Ascending aorta (tissue), 2 donors: ENCODE measurements at regions of chr4 and their contacts with region 1.

Region 1: DNA sequence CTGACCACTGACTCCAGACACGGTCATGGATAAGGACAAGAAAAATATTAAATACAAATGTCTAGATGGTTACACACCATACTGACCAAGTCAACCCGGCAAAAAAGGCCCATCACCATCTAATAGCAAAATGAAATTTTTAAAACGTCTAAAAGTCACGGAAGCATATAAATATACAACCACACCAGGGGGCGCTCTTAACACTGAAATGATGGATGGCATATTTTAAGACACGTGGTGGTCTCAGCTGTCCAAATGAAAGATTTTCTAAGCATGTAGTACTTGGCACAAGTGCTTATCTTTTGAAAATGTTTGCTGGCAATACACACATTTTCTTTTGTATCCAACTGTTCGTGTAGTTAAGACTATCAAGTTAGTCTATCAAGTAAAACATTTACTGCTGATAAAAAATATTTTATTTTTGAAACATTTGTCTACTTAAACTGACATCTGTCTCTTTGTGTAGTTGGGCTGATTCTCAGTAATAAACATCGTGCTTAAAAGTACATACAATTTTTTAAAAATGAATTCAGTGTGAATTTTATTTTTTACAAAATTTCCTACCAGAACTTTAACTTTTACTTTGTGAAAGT is 64.6 kb downstream of the COX7B2 start:
- DNase-seq: no peak
- H3K4me3 ChIP-seq: no peak overlapping the region
- H3K27ac ChIP-seq: no peak overlapping the region
- H3K4me1 ChIP-seq: no peaks in the 10 kb centered on the region
- H3K27me3 ChIP-seq: no peaks in the 10 kb centered on the region
- CTCF ChIP-seq: peak; percentile 36 to 65 (median 64)

Region 2: GRCh38 chr4:46886711-46887110 is 42.3 kb after region 1 on chr4:
- intact Hi-C with region 1: loop called (anchors 5 kb)
- DNase-seq: no peak
- H3K4me3 ChIP-seq: no peak overlapping the region
- H3K27ac ChIP-seq: no peak overlapping the region
- H3K4me1 ChIP-seq: no peaks in the 10 kb centered on the region
- H3K27me3 ChIP-seq: no peaks in the 10 kb centered on the region
- CTCF ChIP-seq: peak in 1 of 3 experiments; percentile 26

Region 3: DNA sequence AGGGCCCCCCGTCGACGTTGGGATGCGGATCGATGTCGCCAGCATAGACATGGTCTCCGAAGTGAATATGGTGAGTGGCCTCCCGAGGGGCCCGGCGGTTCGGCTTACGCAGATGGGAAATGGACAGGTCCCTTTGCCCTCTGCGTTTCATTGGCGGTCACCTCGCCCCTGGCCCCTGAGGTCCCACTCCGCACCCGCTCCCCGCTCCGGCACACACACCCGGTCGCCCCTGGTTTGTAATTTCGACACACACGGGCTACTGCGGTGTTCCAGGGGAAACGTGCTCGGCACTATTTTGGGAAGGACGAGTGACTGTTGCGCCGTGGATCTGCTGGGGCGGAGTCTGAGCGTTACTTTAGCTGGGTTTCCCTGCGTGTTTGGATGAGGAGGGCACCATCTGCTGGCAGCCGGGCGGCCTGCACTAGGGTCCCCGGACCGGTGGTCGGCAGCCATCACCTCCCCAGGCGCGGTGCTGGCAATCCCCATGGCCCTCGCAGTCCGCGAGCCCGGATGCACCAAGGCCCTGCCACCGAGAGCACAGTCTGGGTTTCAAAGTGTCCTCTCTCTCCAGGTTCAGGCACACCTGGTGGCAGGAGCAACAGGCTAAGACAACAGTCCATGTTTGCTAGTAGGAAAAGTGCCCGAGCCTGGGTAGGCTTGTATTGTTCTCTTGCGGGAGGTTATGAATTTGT is 188.1 kb after region 1 on chr4:
- intact Hi-C with region 1: loop called (anchors 1 kb)
- DNase-seq: peak in 1 of 2 donors; percentile 65
- H3K4me3 ChIP-seq: peak overlapping the region; percentile 40 to 48
- H3K27ac ChIP-seq: no peak overlapping the region
- H3K4me1 ChIP-seq: peaks cover 0 to 2% of the 10 kb centered on the region in 2 donors
- H3K27me3 ChIP-seq: no peaks in the 10 kb centered on the region
- CTCF ChIP-seq: peak; percentile 7 to 50 (median 44)

Region 4: GRCh38 chr4:47122592-47123291 is 278.3 kb after region 1 on chr4:
- intact Hi-C with region 1: loop called (anchors 2 kb)
- DNase-seq: peak in 1 of 2 donors; percentile 65
- H3K4me3 ChIP-seq: no peak overlapping the region
- H3K27ac ChIP-seq: no peak overlapping the region
- H3K4me1 ChIP-seq: no peaks in the 10 kb centered on the region
- H3K27me3 ChIP-seq: no peaks in the 10 kb centered on the region
- CTCF ChIP-seq: peak; percentile 17 to 70 (median 61)

Region 5: GRCh38 chr4:47383829-47384427 is 539.5 kb after region 1 on chr4:
- intact Hi-C with region 1: loop called (anchors 5 kb)
- DNase-seq: no peak
- H3K4me3 ChIP-seq: no peak overlapping the region
- H3K27ac ChIP-seq: no peak overlapping the region
- H3K4me1 ChIP-seq: no peaks in the 10 kb centered on the region
- H3K27me3 ChIP-seq: no peaks in the 10 kb centered on the region
- CTCF ChIP-seq: peak in 2 of 3 experiments; percentile 35 to 57